ENCODE measurements at regions of chr11 and their contacts with region 1.

Region 1: GRCh38 chr11:95212609-95213008 is 18.4 kb downstream of the SESN3 start:
- DNase-seq: no peak
- H3K4me3 ChIP-seq: no peak overlapping the region
- H3K27ac ChIP-seq: no peak overlapping the region
- H3K4me1 ChIP-seq: peaks cover 0 to 3% (median under 1%) of the 10 kb centered on the region in 4 experiments
- H3K27me3 ChIP-seq: no peaks in the 10 kb centered on the region

Region 2: GRCh38 chr11:95076416-95076815 is 136.2 kb before region 1 on chr11:
- CTCF ChIA-PET with region 1: no interaction called
- POLR2A ChIA-PET with region 1: no interaction called
- DNase-seq: peak; percentile 36 to 74 (median 59)
- H3K4me3 ChIP-seq: no peak overlapping the region
- H3K27ac ChIP-seq: no peak overlapping the region
- H3K4me1 ChIP-seq: peaks cover 5 to 20% (median 8%) of the 10 kb centered on the region in 4 experiments
- H3K27me3 ChIP-seq: no peaks in the 10 kb centered on the region

Region 3: DNA sequence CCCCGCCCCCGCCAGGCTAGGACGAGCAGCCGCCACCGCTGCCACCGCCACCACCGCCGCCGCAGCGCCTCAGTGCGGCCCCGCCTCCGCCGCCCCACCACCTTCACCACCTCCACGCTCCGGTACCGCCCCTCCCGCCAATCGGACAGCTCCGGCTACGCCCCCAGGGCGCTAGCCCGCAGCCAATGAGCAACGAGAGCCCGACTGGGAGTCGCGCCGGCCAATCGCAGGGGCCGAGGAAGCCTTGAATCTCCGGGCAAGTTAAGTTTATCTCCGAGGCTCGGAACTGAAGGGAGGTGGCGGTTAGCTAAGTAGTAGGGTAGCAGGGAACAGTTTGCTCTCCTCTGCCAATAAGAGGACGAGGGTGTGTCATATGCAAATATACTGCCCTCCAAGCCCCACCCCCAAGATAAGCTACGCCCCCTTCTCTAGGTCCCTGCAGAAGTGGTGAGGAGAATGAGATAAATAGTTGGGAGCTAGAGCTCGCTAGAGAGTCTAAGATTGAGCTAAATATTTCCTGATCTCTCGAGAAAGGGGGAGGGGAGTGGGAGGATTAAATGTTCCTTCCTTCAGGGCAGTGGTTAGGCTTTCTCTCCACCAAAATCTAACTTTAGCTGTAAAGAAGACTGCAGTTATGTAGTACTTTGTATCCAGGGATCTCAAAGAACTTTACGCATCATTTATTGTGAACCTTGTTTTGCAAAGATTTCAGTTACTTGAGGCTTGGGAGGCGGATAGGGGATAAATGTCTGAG is 18.7 kb after region 1 on chr11 and contains the start of gene SESN3:
- CTCF ChIA-PET with region 1: interaction called, 8 read pairs
- POLR2A ChIA-PET with region 1: interaction called, 10 read pairs
- DNase-seq: peak; percentile 100
- H3K4me3 ChIP-seq: peak within 1 kb of the TSS; percentile 85 to 100 (median 99)
- H3K27ac ChIP-seq: peak within 1 kb of the TSS; percentile 77 to 92
- H3K4me1 ChIP-seq: peaks cover 13 to 45% (median 32%) of the 10 kb centered on the region in 4 experiments
- H3K27me3 ChIP-seq: no peaks in the 10 kb centered on the region

Region 4: DNA sequence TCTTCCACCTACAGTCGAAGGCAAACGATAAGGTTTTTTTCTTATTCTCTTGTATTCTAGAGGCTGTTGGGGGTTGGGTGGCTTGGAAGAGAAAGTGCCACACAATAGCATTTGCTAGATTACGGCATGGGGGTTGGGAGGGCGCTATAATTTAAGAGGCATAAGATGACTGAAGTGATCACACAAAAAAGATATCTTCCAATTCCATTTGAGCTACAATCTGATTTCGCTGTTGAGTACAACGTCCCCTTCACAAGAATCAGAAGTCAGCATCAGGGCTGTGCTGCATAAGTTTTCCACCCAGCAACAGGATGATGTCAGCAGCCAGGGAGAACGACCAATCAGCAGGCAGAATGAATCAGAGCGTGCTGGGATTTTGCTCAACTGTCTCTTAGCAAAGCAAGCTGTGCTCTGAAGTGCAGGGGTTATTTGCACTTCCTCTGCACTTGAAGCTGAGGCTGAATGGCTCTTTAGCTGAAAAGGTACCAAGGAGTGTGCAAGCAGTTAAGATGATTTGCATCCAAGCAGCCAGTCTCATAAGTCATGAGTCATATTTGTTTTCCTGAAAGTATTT is 41.6 kb after region 1 on chr11:
- CTCF ChIA-PET with region 1: no interaction called
- POLR2A ChIA-PET with region 1: no interaction called
- DNase-seq: peak; percentile 85 to 96 (median 95)
- H3K4me3 ChIP-seq: peak overlapping the region in 6 of 7 experiments; percentile 13 to 69 (median 58)
- H3K27ac ChIP-seq: no peak overlapping the region
- H3K4me1 ChIP-seq: peaks cover 7 to 34% (median 17%) of the 10 kb centered on the region in 4 experiments
- H3K27me3 ChIP-seq: no peaks in the 10 kb centered on the region

Measured in common myeloid progenitor, CD34-positive (primary cell).